CD8-positive, alpha-beta T cell (primary cell): ENCODE measurements at regions of chr6 and their contacts with region 1.

Region 1: GRCh38 chr6:159098636-159099106 is 53.9 kb upstream of the TAGAP start:
- DNase-seq: peak; percentile 33 to 94 (median 69)
- ATAC-seq: peak; percentile 79
- H3K4me3 ChIP-seq: peak overlapping the region in 1 of 2 experiments; percentile 25
- H3K4me3 Mint-ChIP-seq: peak overlapping the region; percentile 74
- H3K27ac ChIP-seq: peak overlapping the region; percentile 48 to 85
- H3K27ac Mint-ChIP-seq: peak overlapping the region; percentile 94
- H3K4me1 ChIP-seq: peaks cover 60% of the 10 kb centered on the region
- H3K4me1 Mint-ChIP-seq: peaks cover 69% of the 10 kb centered on the region
- H3K27me3 ChIP-seq: no peaks in the 10 kb centered on the region
- H3K27me3 Mint-ChIP-seq: no peaks in the 10 kb centered on the region
- CTCF ChIP-seq: no peak

Region 2: GRCh38 chr6:159080217-159080976 is 18.3 kb before region 1 on chr6:
- CTCF ChIA-PET with region 1: interaction called, 16 read pairs
- POLR2A ChIA-PET with region 1: interaction called, 7 read pairs
- intact Hi-C with region 1: loop called in 1 of 2 experiments (anchors 2 kb)
- DNase-seq: peak in 1 of 9 experiments; percentile 52
- ATAC-seq: peak; percentile 65
- H3K4me3 ChIP-seq: no peak overlapping the region
- H3K4me3 Mint-ChIP-seq: peak overlapping the region; percentile 37
- H3K27ac ChIP-seq: no peak overlapping the region
- H3K27ac Mint-ChIP-seq: peak overlapping the region; percentile 72
- H3K4me1 ChIP-seq: peaks cover 36% of the 10 kb centered on the region
- H3K4me1 Mint-ChIP-seq: peaks cover 46% of the 10 kb centered on the region
- H3K27me3 ChIP-seq: no peaks in the 10 kb centered on the region
- H3K27me3 Mint-ChIP-seq: no peaks in the 10 kb centered on the region
- CTCF ChIP-seq: no peak

Region 3: DNA sequence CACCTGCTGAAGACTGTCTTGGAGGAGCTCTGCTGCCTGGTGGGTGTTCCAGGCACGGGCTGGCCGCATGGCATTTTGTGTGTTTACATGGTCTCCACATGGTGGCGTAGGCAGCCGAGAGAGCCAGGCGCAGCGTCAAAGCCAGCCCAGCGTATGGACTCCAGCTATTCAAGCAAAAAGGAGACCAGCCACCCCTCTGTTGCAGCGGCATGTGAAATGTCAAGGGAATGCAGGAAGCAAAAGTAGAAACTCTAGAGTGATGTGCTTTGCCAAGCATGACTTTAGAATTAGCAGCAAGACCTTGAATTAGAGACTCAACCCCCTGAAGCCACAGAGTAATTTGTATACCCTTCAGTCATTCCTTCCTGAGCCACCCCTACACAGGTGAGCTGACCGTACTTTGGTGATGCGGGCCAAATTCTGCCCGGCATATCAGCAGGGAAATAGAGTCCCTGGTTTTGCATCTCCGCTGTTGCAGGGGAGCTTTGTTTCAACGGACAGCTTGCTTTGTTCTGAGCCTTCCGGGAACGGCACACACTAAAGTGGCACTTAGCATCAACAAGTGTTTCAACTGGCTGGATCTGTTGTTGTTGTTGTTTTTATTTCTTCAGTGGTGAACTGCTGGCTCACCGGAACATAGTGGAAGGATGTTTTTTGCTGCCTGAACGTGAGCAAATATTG is 119.1 kb after region 1 on chr6:
- CTCF ChIA-PET with region 1: no interaction called
- POLR2A ChIA-PET with region 1: no interaction called
- intact Hi-C with region 1: no loop called
- DNase-seq: peak in 2 of 9 experiments; percentile 16 to 18
- ATAC-seq: no peak
- H3K4me3 ChIP-seq: no peak overlapping the region
- H3K4me3 Mint-ChIP-seq: no peak overlapping the region
- H3K27ac ChIP-seq: no peak overlapping the region
- H3K27ac Mint-ChIP-seq: no peak overlapping the region
- H3K4me1 ChIP-seq: no peaks in the 10 kb centered on the region
- H3K4me1 Mint-ChIP-seq: peaks cover 4% of the 10 kb centered on the region
- H3K27me3 ChIP-seq: no peaks in the 10 kb centered on the region
- H3K27me3 Mint-ChIP-seq: peaks cover 11% of the 10 kb centered on the region
- CTCF ChIP-seq: no peak